Endothelial cell of umbilical vein (primary cell): ENCODE measurements at regions of chr1 and their contacts with region 1.

Region 1: GRCh38 chr1:65431111-65431705 is 10.7 kb downstream of the LEPR start:
- DNase-seq: peak; percentile 79
- H3K4me3 ChIP-seq: peak overlapping the region in 1 of 3 experiments; percentile 26
- H3K27ac ChIP-seq: peak overlapping the region; percentile 97
- H3K4me1 ChIP-seq: peaks cover 33% of the 10 kb centered on the region
- H3K27me3 ChIP-seq: no peaks in the 10 kb centered on the region
- CTCF ChIP-seq: peak; percentile 35 to 36
- POLR2A ChIP-seq: no peak

Region 2: DNA sequence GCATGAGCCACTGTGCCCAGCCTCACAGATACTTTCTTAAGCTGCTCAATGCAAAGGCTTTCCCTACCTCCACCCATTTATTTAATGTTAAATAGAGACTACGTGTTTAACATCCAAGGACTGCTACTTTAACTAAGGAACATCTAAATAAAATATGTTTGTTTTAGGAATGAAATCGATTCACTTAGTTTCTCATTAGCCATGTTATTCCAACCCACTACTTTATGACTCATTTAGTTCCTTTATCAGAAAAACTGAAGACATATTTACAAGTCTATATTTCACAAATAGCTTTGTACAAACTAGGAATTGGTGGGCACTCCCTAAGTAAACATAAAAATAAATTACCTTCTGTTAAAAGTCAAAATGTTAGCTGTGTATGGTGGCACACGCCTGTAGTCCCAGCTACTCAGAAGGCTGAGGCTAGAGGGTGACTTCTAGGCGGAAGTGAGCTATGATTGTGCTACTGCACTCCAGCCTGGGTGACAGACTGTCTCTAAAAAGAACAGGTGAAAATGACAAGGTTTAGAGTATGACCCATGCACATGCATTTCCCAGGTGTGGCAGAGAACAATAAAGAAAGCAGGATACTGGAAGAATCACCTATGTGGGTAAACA is 323.1 kb before region 1 on chr1:
- CTCF ChIA-PET with region 1: no interaction called
- POLR2A ChIA-PET with region 1: no interaction called
- dilution Hi-C with region 1: no loop called
- intact Hi-C with region 1: no loop called
- DNase-seq: no peak
- H3K4me3 ChIP-seq: no peak overlapping the region
- H3K27ac ChIP-seq: no peak overlapping the region
- H3K4me1 ChIP-seq: no peaks in the 10 kb centered on the region
- H3K27me3 ChIP-seq: no peaks in the 10 kb centered on the region
- CTCF ChIP-seq: no peak
- POLR2A ChIP-seq: no peak

Region 3: GRCh38 chr1:65156910-65157545 is 274.2 kb before region 1 on chr1:
- CTCF ChIA-PET with region 1: no interaction called
- POLR2A ChIA-PET with region 1: no interaction called
- dilution Hi-C with region 1: no loop called
- intact Hi-C with region 1: no loop called
- DNase-seq: no peak
- H3K4me3 ChIP-seq: no peak overlapping the region
- H3K27ac ChIP-seq: no peak overlapping the region
- H3K4me1 ChIP-seq: no peaks in the 10 kb centered on the region
- H3K27me3 ChIP-seq: no peaks in the 10 kb centered on the region
- CTCF ChIP-seq: no peak
- POLR2A ChIP-seq: no peak

Region 4: GRCh38 chr1:65235867-65236805 is 195.1 kb before region 1 on chr1:
- CTCF ChIA-PET with region 1: interaction called, 16 read pairs
- POLR2A ChIA-PET with region 1: no interaction called
- dilution Hi-C with region 1: no loop called
- intact Hi-C with region 1: loop called (anchors 1 kb)
- DNase-seq: peak; percentile 52
- H3K4me3 ChIP-seq: no peak overlapping the region
- H3K27ac ChIP-seq: no peak overlapping the region
- H3K4me1 ChIP-seq: no peaks in the 10 kb centered on the region
- H3K27me3 ChIP-seq: no peaks in the 10 kb centered on the region
- CTCF ChIP-seq: peak; percentile 37 to 40
- POLR2A ChIP-seq: no peak

Region 5: DNA sequence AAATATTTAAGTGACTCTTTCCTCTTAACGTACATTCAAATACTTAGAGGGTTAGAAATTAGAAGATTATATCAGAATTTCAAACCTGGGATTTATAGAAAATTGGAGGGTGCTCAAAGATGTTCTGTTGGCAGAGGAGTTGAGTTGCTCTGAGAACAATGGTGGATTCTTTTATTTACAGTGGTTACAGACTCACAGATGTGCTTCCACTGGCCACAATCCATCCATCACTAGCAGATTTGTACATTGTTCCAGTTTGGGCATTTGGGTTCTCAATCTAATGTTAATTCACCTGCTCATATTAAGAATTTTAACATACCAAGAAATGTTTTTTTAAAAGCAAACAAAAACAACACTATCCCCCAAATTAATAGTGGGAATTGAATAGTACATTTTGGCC is 98.4 kb before region 1 on chr1:
- CTCF ChIA-PET with region 1: no interaction called
- POLR2A ChIA-PET with region 1: no interaction called
- dilution Hi-C with region 1: no loop called
- intact Hi-C with region 1: no loop called
- DNase-seq: no peak
- H3K4me3 ChIP-seq: no peak overlapping the region
- H3K27ac ChIP-seq: no peak overlapping the region
- H3K4me1 ChIP-seq: no peaks in the 10 kb centered on the region
- H3K27me3 ChIP-seq: no peaks in the 10 kb centered on the region
- CTCF ChIP-seq: no peak
- POLR2A ChIP-seq: no peak

Region 6: GRCh38 chr1:65401606-65402005 is 29.6 kb before region 1 on chr1:
- CTCF ChIA-PET with region 1: no interaction called
- POLR2A ChIA-PET with region 1: no interaction called
- dilution Hi-C with region 1: no loop called
- intact Hi-C with region 1: no loop called
- DNase-seq: no peak
- H3K4me3 ChIP-seq: no peak overlapping the region
- H3K27ac ChIP-seq: no peak overlapping the region
- H3K4me1 ChIP-seq: no peaks in the 10 kb centered on the region
- H3K27me3 ChIP-seq: no peaks in the 10 kb centered on the region
- CTCF ChIP-seq: no peak
- POLR2A ChIP-seq: no peak

Region 7: GRCh38 chr1:65509912-65510680 is 78.9 kb after region 1 on chr1:
- CTCF ChIA-PET with region 1: interaction called, 3 read pairs
- POLR2A ChIA-PET with region 1: no interaction called
- dilution Hi-C with region 1: no loop called
- intact Hi-C with region 1: loop called (anchors 5 kb)
- DNase-seq: peak; percentile 86
- H3K4me3 ChIP-seq: no peak overlapping the region
- H3K27ac ChIP-seq: no peak overlapping the region
- H3K4me1 ChIP-seq: peaks cover 27% of the 10 kb centered on the region
- H3K27me3 ChIP-seq: no peaks in the 10 kb centered on the region
- CTCF ChIP-seq: no peak
- POLR2A ChIP-seq: no peak

Region 8: DNA sequence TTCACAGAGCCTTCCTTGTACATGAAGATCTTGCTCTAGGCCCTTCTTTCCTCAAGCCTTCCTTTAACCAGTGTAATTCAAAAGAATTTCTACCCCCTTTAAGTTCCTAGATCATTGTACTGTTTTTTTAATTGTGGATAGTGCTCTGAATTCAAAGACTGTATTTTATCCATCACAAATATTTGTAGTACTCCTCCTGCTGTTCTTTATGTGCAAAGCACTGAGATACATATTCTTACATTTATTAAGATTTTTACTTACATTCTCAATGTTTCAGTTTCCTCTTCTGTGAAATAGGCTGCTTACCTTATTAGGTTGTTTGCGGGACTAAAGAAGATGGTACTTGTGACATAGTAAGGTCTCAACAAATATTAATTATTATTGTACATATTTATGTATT is 192.7 kb after region 1 on chr1:
- CTCF ChIA-PET with region 1: interaction called, 5 read pairs
- POLR2A ChIA-PET with region 1: no interaction called
- dilution Hi-C with region 1: no loop called
- intact Hi-C with region 1: loop called (anchors 5 kb)
- DNase-seq: no peak
- H3K4me3 ChIP-seq: no peak overlapping the region
- H3K27ac ChIP-seq: no peak overlapping the region
- H3K4me1 ChIP-seq: no peaks in the 10 kb centered on the region
- H3K27me3 ChIP-seq: no peaks in the 10 kb centered on the region
- CTCF ChIP-seq: no peak
- POLR2A ChIP-seq: no peak

Region 9: DNA sequence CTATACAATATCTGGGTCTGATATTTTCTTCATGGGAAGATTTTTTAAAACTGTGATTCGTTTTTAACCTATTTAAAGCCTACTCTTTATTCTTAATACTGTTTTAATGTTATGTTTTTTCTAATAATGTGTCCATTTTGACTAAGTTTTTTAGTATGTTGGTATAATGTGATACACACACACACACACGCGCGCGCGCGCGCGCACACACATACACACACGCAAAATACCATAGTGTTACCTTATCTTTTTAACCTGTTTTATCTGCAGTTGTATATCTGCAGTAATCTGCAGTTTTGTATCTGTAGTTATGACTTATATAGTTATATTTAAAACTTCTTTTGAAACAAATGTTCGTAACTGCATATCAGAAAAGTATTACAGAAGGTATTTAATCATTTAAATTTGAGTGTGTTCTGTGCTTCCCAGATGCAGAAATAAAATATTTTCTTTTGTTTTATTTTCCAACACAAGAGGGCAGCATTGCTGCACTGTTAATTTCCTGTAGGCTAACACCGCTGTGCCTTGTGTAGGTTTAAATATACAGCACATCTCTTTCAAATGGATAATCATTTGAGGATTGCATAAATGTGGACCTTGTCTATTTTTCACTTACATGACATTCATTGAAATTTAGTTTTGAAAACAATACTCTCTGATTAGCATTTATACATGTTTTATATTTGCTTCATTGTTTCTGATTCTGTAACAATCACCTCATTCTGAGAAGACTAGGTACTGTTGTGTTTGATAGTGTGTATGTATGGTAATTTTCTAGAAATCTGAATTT is 527.5 kb after region 1 on chr1:
- CTCF ChIA-PET with region 1: no interaction called
- POLR2A ChIA-PET with region 1: no interaction called
- dilution Hi-C with region 1: no loop called
- intact Hi-C with region 1: loop called (anchors 5 kb)
- DNase-seq: peak; percentile 73
- H3K4me3 ChIP-seq: no peak overlapping the region
- H3K27ac ChIP-seq: no peak overlapping the region
- H3K4me1 ChIP-seq: peaks cover 10% of the 10 kb centered on the region
- H3K27me3 ChIP-seq: no peaks in the 10 kb centered on the region
- CTCF ChIP-seq: peak; percentile 21 to 29
- POLR2A ChIP-seq: no peak